CD4-positive, alpha-beta T cell (primary cell): ENCODE measurements at regions of chr10 and their contacts with region 1.

Region 1: DNA sequence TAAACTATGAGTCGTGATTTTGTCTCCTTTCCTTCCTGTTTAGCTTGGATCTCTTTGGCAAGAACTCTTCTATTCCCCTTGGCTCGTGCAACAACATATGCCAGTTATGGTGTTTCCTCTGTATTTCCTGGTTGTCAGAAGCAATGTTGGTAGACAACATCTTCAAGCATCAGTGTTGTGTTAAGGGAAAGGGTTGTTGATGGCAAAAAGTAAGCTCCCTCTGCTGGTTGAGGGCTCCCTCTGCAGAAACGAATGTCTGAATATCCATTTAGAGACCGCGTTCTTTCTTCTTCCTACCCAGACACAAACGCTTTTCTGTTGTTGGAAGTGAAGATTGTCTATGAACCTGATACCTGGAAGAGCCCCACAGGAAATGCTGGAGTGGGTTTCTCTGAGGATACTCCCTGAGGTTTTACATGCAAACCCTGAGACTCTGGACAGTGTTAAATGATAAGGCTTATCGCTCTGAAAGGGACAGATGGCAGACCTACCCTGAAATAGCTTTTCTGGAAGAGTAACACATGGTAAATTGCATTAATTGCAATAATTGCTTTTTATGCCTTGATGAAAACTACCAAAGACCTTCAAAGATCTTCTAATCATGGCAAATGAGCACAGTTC is 23.5 kb upstream of the C1QL3 start:
- DNase-seq: peak in 4 of 14 experiments; percentile 3 to 30 (median 24)
- ATAC-seq: no peak
- H3K4me3 ChIP-seq: no peak overlapping the region
- H3K4me3 Mint-ChIP-seq: no peak overlapping the region
- H3K27ac ChIP-seq: no peak overlapping the region
- H3K27ac Mint-ChIP-seq: no peak overlapping the region
- H3K4me1 ChIP-seq: no peaks in the 10 kb centered on the region
- H3K4me1 Mint-ChIP-seq: no peaks in the 10 kb centered on the region
- H3K27me3 ChIP-seq: peaks cover 0 to 6% of the 10 kb centered on the region in 2 experiments
- H3K27me3 Mint-ChIP-seq: peaks cover 44% of the 10 kb centered on the region
- CTCF ChIP-seq: peak; percentile 34

Region 2: GRCh38 chr10:15879058-15879457 is 666.2 kb before region 1 on chr10:
- CTCF ChIA-PET with region 1: no interaction called
- POLR2A ChIA-PET with region 1: no interaction called
- intact Hi-C with region 1: loop called in 1 of 2 experiments (anchors 2 kb)
- DNase-seq: peak in 3 of 14 experiments; percentile 43 to 47 (median 44)
- ATAC-seq: peak; percentile 61
- H3K4me3 ChIP-seq: no peak overlapping the region
- H3K4me3 Mint-ChIP-seq: no peak overlapping the region
- H3K27ac ChIP-seq: no peak overlapping the region
- H3K27ac Mint-ChIP-seq: no peak overlapping the region
- H3K4me1 ChIP-seq: no peaks in the 10 kb centered on the region
- H3K4me1 Mint-ChIP-seq: no peaks in the 10 kb centered on the region
- H3K27me3 ChIP-seq: peaks cover 0 to 12% of the 10 kb centered on the region in 2 experiments
- H3K27me3 Mint-ChIP-seq: peaks cover 79% of the 10 kb centered on the region
- CTCF ChIP-seq: peak; percentile 60

Region 3: GRCh38 chr10:15901889-15902288 is 643.3 kb before region 1 on chr10:
- CTCF ChIA-PET with region 1: no interaction called
- POLR2A ChIA-PET with region 1: no interaction called
- intact Hi-C with region 1: loop called (anchors 10 kb)
- DNase-seq: no peak
- ATAC-seq: no peak
- H3K4me3 ChIP-seq: no peak overlapping the region
- H3K4me3 Mint-ChIP-seq: no peak overlapping the region
- H3K27ac ChIP-seq: no peak overlapping the region
- H3K27ac Mint-ChIP-seq: no peak overlapping the region
- H3K4me1 ChIP-seq: no peaks in the 10 kb centered on the region
- H3K4me1 Mint-ChIP-seq: no peaks in the 10 kb centered on the region
- H3K27me3 ChIP-seq: peaks cover under 1 to 14% of the 10 kb centered on the region in 2 experiments
- H3K27me3 Mint-ChIP-seq: peaks cover 33% of the 10 kb centered on the region
- CTCF ChIP-seq: no peak

Region 4: GRCh38 chr10:16458166-16458955 is 86.9 kb before region 1 on chr10:
- CTCF ChIA-PET with region 1: no interaction called
- POLR2A ChIA-PET with region 1: no interaction called
- intact Hi-C with region 1: no loop called
- DNase-seq: no peak
- ATAC-seq: no peak
- H3K4me3 ChIP-seq: no peak overlapping the region
- H3K4me3 Mint-ChIP-seq: no peak overlapping the region
- H3K27ac ChIP-seq: no peak overlapping the region
- H3K27ac Mint-ChIP-seq: no peak overlapping the region
- H3K4me1 ChIP-seq: no peaks in the 10 kb centered on the region
- H3K4me1 Mint-ChIP-seq: peaks cover 14% of the 10 kb centered on the region
- H3K27me3 ChIP-seq: no peaks in the 10 kb centered on the region
- H3K27me3 Mint-ChIP-seq: no peaks in the 10 kb centered on the region
- CTCF ChIP-seq: no peak